ENCODE measurements at regions of chr11 and their contacts with region 1.

Region 1: GRCh38 chr11:113532697-113533424 is 57.7 kb upstream of the DRD2 start:
- DNase-seq: peak; percentile 59 to 82 (median 70)
- H3K4me3 ChIP-seq: no peak overlapping the region
- H3K27ac ChIP-seq: no peak overlapping the region
- H3K4me1 ChIP-seq: no peaks in the 10 kb centered on the region
- H3K27me3 ChIP-seq: peaks cover 0 to 26% (median 5%) of the 10 kb centered on the region in 5 experiments

Region 2: GRCh38 chr11:113305440-113306336 is 227.2 kb before region 1 on chr11:
- CTCF ChIA-PET with region 1: interaction called, 53 read pairs
- POLR2A ChIA-PET with region 1: no interaction called
- DNase-seq: peak; percentile 61 to 81 (median 70)
- H3K4me3 ChIP-seq: no peak overlapping the region
- H3K27ac ChIP-seq: no peak overlapping the region
- H3K4me1 ChIP-seq: no peaks in the 10 kb centered on the region
- H3K27me3 ChIP-seq: peaks cover 0 to 4% (median 0%) of the 10 kb centered on the region in 5 experiments

Region 3: DNA sequence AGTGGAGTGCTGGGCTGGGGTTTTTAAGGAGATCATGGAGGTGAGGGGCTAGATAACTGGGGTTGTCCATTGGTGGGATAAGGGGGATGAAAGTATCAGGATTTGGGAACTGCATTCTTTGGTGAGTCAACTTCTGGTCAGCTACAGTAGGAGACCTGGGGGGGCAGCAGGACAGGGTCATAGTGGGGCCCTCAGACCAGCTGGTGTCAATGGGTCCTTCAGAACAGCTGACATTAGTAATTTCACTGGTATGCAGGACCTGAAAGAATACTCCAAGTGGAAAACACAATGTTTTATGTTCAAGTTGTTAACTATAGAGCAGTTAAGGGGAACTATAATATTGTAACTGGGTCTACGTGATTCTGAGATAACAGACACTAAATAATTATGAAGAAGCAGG is 221.3 kb before region 1 on chr11:
- CTCF ChIA-PET with region 1: interaction called, 53 read pairs
- POLR2A ChIA-PET with region 1: no interaction called
- DNase-seq: no peak
- H3K4me3 ChIP-seq: no peak overlapping the region
- H3K27ac ChIP-seq: no peak overlapping the region
- H3K4me1 ChIP-seq: peaks cover 4 to 12% (median 10%) of the 10 kb centered on the region in 4 experiments
- H3K27me3 ChIP-seq: peaks cover 0 to 6% (median 0%) of the 10 kb centered on the region in 5 experiments

Region 4: GRCh38 chr11:113519989-113520613 is 12.8 kb before region 1 on chr11:
- CTCF ChIA-PET with region 1: interaction called, 33 read pairs
- POLR2A ChIA-PET with region 1: no interaction called
- DNase-seq: no peak
- H3K4me3 ChIP-seq: no peak overlapping the region
- H3K27ac ChIP-seq: no peak overlapping the region
- H3K4me1 ChIP-seq: no peaks in the 10 kb centered on the region
- H3K27me3 ChIP-seq: peaks cover 0 to 13% (median 5%) of the 10 kb centered on the region in 5 experiments

Region 5: DNA sequence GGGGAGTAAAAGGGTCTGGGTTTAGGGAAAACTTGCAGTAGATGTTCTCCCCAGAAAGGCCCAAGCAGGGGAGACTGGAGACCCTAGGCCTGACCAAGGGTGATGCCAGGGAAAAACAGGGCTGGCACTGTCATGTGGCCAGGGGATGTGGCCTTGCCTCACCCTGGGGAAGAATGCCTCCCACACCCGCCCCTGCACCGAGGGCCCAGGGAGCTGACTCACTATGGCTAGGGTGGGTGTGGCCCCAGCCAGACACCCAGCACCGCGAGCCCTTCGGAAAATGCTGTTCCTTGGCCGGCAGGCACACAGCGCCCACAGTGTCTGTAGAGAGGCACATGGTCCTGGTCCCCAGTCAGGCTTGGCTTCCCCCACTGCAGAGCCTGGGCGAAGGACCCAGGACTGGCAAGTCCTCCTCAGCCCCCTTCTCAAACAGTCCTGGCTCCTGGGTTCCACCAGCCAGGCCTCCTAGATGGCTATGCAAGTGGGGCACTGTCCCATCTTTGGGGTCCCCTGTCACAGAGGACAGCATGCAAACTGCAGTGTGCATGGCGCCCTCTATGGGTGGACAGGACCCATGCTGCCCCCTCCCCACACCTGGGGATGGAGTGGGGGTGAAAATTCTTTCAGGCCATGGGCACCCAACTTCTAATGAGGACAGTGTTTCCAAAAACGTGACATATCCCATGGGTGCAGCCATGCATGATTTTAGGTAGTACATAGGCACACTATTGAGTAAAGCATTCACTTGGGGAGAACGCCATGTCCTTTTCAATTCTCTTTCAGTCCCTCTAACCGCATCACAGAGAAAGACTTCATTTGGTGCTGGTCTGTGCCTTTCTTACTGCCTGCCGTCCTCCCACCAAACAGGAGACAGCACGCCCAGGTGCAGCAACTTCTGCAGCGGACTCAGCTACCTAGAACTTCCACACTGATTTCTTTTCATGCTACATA is 158.0 kb after region 1 on chr11:
- CTCF ChIA-PET with region 1: no interaction called
- POLR2A ChIA-PET with region 1: no interaction called
- DNase-seq: peak; percentile 10 to 23 (median 11)
- H3K4me3 ChIP-seq: no peak overlapping the region
- H3K27ac ChIP-seq: no peak overlapping the region
- H3K4me1 ChIP-seq: no peaks in the 10 kb centered on the region
- H3K27me3 ChIP-seq: no peaks in the 10 kb centered on the region